CD4-positive, alpha-beta memory T cell (primary cell): ENCODE measurements at regions of chr9 and their contacts with region 1.

Region 1: GRCh38 chr9:19456996-19457692 is 48.3 kb downstream of the ACER2 start:
- DNase-seq: peak; percentile 58 to 67 (median 64)
- H3K4me3 ChIP-seq: no peak overlapping the region
- H3K4me3 Mint-ChIP-seq: peak overlapping the region in 5 of 8 donors; percentile 40 to 60 (median 47)
- H3K27ac ChIP-seq: no peak overlapping the region
- H3K27ac Mint-ChIP-seq: peak overlapping the region in 1 of 7 donors; percentile 11
- H3K4me1 ChIP-seq: peaks cover 6% of the 10 kb centered on the region
- H3K4me1 Mint-ChIP-seq: peaks cover 5 to 9% (median 6%) of the 10 kb centered on the region in 4 donors
- H3K27me3 ChIP-seq: no peaks in the 10 kb centered on the region
- H3K27me3 Mint-ChIP-seq: peaks cover 0 to 1% of the 10 kb centered on the region in 2 donors

Region 2: GRCh38 chr9:19028835-19029451 is 428.2 kb before region 1 on chr9:
- CTCF ChIA-PET with region 1: interaction called, 3 read pairs
- POLR2A ChIA-PET with region 1: no interaction called
- intact Hi-C with region 1: loop called (anchors 5 kb)
- DNase-seq: peak in 4 of 5 donors; percentile 21 to 35 (median 24)
- H3K4me3 ChIP-seq: no peak overlapping the region
- H3K4me3 Mint-ChIP-seq: peak overlapping the region in 1 of 8 donors; percentile 37
- H3K27ac ChIP-seq: no peak overlapping the region
- H3K27ac Mint-ChIP-seq: no peak overlapping the region
- H3K4me1 ChIP-seq: no peaks in the 10 kb centered on the region
- H3K4me1 Mint-ChIP-seq: peaks cover 0 to 2% (median 0%) of the 10 kb centered on the region in 4 donors
- H3K27me3 ChIP-seq: peaks cover 4% of the 10 kb centered on the region
- H3K27me3 Mint-ChIP-seq: peaks cover 4 to 11% of the 10 kb centered on the region in 2 donors

Region 3: DNA sequence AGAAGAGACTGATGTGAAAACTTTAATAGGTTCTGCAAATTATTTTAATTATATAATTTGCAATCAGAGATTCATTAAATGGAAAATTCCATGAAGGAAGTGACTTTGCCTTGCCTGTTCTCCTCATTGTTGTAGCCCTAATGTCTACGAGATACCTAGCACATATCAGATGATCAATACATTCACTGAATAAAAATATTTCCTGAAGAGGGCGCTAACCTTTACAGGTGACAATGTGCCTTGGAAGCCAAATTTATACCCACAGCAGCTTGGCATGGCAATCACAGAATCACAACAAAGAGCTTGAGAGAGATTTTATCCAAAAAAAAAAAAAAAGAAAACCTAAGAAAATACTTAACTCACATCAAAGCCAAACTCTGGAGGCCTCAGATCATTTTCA is 371.8 kb before region 1 on chr9:
- CTCF ChIA-PET with region 1: interaction called, 30 read pairs
- POLR2A ChIA-PET with region 1: no interaction called
- intact Hi-C with region 1: loop called (anchors 1 kb)
- DNase-seq: peak in 4 of 5 donors; percentile 49 to 65 (median 54)
- H3K4me3 ChIP-seq: no peak overlapping the region
- H3K4me3 Mint-ChIP-seq: no peak overlapping the region
- H3K27ac ChIP-seq: no peak overlapping the region
- H3K27ac Mint-ChIP-seq: peak overlapping the region in 2 of 7 donors; percentile 19 to 58
- H3K4me1 ChIP-seq: no peaks in the 10 kb centered on the region
- H3K4me1 Mint-ChIP-seq: peaks cover 0 to 4% (median 3%) of the 10 kb centered on the region in 4 donors
- H3K27me3 ChIP-seq: no peaks in the 10 kb centered on the region
- H3K27me3 Mint-ChIP-seq: no peaks in the 10 kb centered on the region

Region 4: DNA sequence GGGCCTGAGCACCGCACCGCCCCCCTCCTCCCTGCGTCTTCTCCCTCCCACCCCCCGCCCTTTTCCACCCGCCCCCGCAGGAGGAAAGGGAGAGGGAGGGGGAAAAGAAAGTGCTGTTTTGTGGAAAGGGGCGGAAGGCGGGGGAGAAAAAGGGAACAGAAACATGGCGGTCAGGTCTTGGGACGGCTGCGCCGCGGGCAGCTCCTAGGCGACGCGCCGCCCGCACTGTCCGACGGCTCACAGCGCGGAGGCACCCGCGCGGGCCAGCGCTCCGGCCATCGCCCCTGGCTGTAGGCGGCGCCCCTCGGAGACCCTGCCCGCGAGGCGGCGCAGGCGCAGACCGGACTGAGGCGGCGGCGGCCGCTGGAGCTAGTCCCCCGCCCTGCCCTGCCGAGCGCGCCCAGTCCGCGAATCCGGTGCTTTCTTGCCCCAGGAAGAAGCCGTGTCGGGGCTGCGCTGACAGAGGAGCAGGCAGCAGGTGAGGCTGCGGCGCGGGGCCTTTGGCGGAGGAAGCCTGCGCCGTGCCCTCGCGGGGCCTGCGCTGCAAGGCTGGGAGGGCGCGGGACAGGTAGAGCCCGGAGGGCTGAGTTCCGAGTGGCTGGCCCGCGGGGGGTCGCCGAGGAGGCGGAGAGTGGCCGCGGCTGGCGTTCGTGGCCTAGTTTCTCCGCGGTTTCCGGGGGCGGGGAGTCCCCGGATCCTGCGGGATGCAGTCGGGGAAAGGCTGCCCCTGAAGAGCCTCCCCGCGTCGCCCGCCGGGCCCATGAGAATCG is 226.6 kb before region 1 on chr9 and contains the start of gene DENND4C:
- CTCF ChIA-PET with region 1: interaction called, 3 read pairs
- POLR2A ChIA-PET with region 1: no interaction called
- intact Hi-C with region 1: loop called (anchors 1 kb)
- DNase-seq: peak; percentile 85 to 87 (median 85)
- H3K4me3 ChIP-seq: peak within 1 kb of the TSS; percentile 53 to 73
- H3K4me3 Mint-ChIP-seq: peak within 1 kb of the TSS in 6 of 8 donors; percentile 82 to 89 (median 88)
- H3K27ac ChIP-seq: peak within 1 kb of the TSS; percentile 73
- H3K27ac Mint-ChIP-seq: peak within 1 kb of the TSS in 6 of 7 donors; percentile 62 to 93 (median 90)
- H3K4me1 ChIP-seq: peaks cover 25% of the 10 kb centered on the region
- H3K4me1 Mint-ChIP-seq: peaks cover 5 to 11% (median 9%) of the 10 kb centered on the region in 4 donors
- H3K27me3 ChIP-seq: no peaks in the 10 kb centered on the region
- H3K27me3 Mint-ChIP-seq: no peaks in the 10 kb centered on the region
- total RNA-seq, gene DENND4C: 69.0 to 71.8 TPM

Region 5: GRCh38 chr9:19281801-19282200 is 175.3 kb before region 1 on chr9:
- CTCF ChIA-PET with region 1: no interaction called
- POLR2A ChIA-PET with region 1: no interaction called
- intact Hi-C with region 1: no loop called
- DNase-seq: no peak
- H3K4me3 ChIP-seq: no peak overlapping the region
- H3K4me3 Mint-ChIP-seq: peak overlapping the region in 1 of 8 donors; percentile 41
- H3K27ac ChIP-seq: no peak overlapping the region
- H3K27ac Mint-ChIP-seq: peak overlapping the region in 1 of 7 donors; percentile 85
- H3K4me1 ChIP-seq: peaks cover 6% of the 10 kb centered on the region
- H3K4me1 Mint-ChIP-seq: peaks cover 20 to 49% (median 35%) of the 10 kb centered on the region in 4 donors
- H3K27me3 ChIP-seq: no peaks in the 10 kb centered on the region
- H3K27me3 Mint-ChIP-seq: no peaks in the 10 kb centered on the region

Region 6: GRCh38 chr9:19358701-19359100 is 98.4 kb before region 1 on chr9:
- CTCF ChIA-PET with region 1: interaction called, 9 read pairs
- POLR2A ChIA-PET with region 1: no interaction called
- intact Hi-C with region 1: loop called (anchors 5 kb)
- DNase-seq: no peak
- H3K4me3 ChIP-seq: no peak overlapping the region
- H3K4me3 Mint-ChIP-seq: no peak overlapping the region
- H3K27ac ChIP-seq: no peak overlapping the region
- H3K27ac Mint-ChIP-seq: peak overlapping the region in 4 of 7 donors; percentile 1 to 44 (median 38)
- H3K4me1 ChIP-seq: no peaks in the 10 kb centered on the region
- H3K4me1 Mint-ChIP-seq: peaks cover 0 to 1% (median 0%) of the 10 kb centered on the region in 4 donors
- H3K27me3 ChIP-seq: no peaks in the 10 kb centered on the region
- H3K27me3 Mint-ChIP-seq: no peaks in the 10 kb centered on the region

Region 7: DNA sequence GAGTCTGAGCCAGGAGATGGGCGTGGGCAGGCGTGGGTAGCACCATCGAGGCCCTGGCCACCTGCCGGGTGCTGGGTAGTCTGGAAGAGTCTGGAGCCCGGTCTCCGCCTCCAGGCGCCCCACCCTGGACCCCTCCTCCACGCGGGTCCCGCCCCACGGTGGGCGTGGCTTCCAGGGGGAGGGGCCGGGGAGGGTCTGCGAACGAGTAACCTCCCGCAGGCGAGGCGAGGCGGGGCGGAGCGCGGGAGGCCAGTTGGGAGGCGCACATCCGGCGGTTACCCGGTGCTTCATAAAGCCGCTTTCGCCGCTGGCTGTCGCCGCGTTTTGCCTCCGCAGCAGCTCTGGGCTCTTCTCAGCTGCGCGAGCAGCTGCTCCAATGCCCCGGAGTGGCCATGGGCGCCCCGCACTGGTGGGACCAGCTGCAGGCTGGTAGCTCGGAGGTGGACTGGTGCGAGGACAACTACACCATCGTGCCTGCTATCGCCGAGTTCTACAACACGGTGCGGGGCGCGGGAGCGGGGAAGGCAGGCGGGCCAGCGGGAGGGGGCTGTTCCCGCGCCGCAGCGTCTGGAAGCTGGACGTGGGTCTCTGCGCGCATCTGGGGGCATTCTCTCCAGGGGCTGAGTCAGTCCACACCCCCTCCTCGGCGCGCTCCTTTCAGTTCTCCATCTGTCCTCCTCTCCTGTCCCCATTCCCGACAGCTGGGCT is 48.3 kb before region 1 on chr9 and contains the start of gene ACER2:
- CTCF ChIA-PET with region 1: interaction called, 4 read pairs
- POLR2A ChIA-PET with region 1: no interaction called
- intact Hi-C with region 1: loop called (anchors 2 kb)
- DNase-seq: peak; percentile 91 to 97 (median 93)
- H3K4me3 ChIP-seq: peak within 1 kb of the TSS; percentile 94 to 100
- H3K4me3 Mint-ChIP-seq: peak within 1 kb of the TSS; percentile 91 to 96 (median 96)
- H3K27ac ChIP-seq: peak within 1 kb of the TSS; percentile 69
- H3K27ac Mint-ChIP-seq: peak within 1 kb of the TSS; percentile 65 to 94 (median 90)
- H3K4me1 ChIP-seq: peaks cover 23% of the 10 kb centered on the region
- H3K4me1 Mint-ChIP-seq: peaks cover 5 to 24% (median 16%) of the 10 kb centered on the region in 4 donors
- H3K27me3 ChIP-seq: no peaks in the 10 kb centered on the region
- H3K27me3 Mint-ChIP-seq: no peaks in the 10 kb centered on the region
- total RNA-seq, gene ACER2: 5.9 to 6.0 TPM

Region 8: DNA sequence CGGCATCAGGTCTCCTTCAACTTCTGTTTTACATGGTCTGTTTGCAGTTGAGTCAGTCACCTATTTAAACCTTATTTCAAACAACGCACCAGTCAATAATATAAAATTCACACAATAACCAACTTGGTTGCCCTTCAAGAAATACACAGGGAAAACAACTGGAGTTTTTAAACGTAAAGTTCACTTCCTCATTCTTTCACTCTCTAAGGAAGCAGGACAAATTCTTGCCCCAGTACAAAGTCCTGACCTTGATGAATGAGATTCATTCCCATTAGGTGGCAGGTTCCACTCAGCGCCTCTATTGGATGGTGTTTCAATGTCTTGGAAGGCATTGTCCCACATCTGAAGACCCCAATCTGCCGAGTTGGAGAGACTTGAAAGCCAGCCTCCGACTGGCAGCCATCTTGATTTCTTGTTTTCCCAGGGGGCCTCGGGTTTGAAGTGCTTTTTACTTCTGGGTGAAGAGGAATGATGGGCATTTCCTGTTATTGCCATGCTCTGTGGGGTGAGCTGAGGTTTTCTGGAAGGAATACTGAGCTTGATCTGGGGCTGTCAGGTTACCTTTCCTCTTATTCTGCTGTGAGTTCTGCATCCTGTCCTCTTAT is 56.6 kb after region 1 on chr9:
- CTCF ChIA-PET with region 1: no interaction called
- POLR2A ChIA-PET with region 1: no interaction called
- intact Hi-C with region 1: no loop called
- DNase-seq: no peak
- H3K4me3 ChIP-seq: no peak overlapping the region
- H3K4me3 Mint-ChIP-seq: no peak overlapping the region
- H3K27ac ChIP-seq: no peak overlapping the region
- H3K27ac Mint-ChIP-seq: no peak overlapping the region
- H3K4me1 ChIP-seq: no peaks in the 10 kb centered on the region
- H3K4me1 Mint-ChIP-seq: peaks cover 0 to 2% (median 0%) of the 10 kb centered on the region in 4 donors
- H3K27me3 ChIP-seq: no peaks in the 10 kb centered on the region
- H3K27me3 Mint-ChIP-seq: peaks cover 10 to 11% of the 10 kb centered on the region in 2 donors

Region 9: GRCh38 chr9:20997503-20998076 is 1540.4 kb after region 1 on chr9:
- CTCF ChIA-PET with region 1: no interaction called
- POLR2A ChIA-PET with region 1: no interaction called
- intact Hi-C with region 1: no loop called
- DNase-seq: no peak
- H3K4me3 ChIP-seq: no peak overlapping the region
- H3K4me3 Mint-ChIP-seq: peak overlapping the region in 3 of 8 donors; percentile 13 to 68 (median 32)
- H3K27ac ChIP-seq: no peak overlapping the region
- H3K27ac Mint-ChIP-seq: peak overlapping the region; percentile 8 to 88 (median 76)
- H3K4me1 ChIP-seq: peaks cover 37% of the 10 kb centered on the region
- H3K4me1 Mint-ChIP-seq: peaks cover 39 to 53% (median 50%) of the 10 kb centered on the region in 4 donors
- H3K27me3 ChIP-seq: no peaks in the 10 kb centered on the region
- H3K27me3 Mint-ChIP-seq: no peaks in the 10 kb centered on the region